Endothelial cell of umbilical vein (primary cell): ENCODE measurements at regions of chr5 and their contacts with region 1.

Region 1: DNA sequence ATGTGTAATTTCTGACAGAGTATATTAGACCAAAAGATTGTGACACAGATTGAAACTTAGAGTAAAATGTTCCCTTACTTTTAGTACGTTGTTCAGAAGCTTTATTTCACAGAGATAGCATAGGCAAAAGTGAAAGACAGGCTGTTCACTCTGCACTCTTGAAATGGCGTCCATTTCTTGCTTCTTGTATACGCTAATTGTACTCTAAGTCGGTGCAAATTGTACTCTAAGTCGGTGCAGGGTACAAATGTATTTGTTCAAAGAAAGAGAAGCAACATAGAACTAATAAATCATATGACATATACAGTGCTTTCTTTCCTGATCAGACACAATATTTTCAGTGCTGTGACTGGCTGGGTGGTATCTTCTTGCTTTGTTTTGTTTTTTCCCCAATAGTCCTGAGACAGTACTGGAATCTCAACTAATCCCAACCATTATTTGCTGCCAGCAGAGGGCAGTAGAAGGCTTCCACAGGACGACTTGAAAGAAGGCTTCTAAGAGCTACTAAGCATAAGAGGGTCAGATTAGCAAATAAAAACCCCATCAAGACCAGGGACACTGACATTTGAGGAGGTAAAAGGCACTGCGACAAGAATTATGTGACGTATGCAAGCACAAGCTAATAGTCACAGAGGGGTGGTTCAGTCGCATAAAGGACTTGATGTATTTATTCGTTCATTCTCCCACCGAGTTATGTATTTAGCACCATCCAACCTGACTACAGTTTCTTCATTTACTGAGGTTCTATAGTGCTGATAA is 831.8 kb downstream of the TAF11L14 start:
- DNase-seq: peak; percentile 10
- H3K4me3 ChIP-seq: no peak overlapping the region
- H3K27ac ChIP-seq: no peak overlapping the region
- H3K4me1 ChIP-seq: no peaks in the 10 kb centered on the region
- H3K27me3 ChIP-seq: no peaks in the 10 kb centered on the region
- CTCF ChIP-seq: peak; percentile 41 to 45
- POLR2A ChIP-seq: no peak

Region 2: GRCh38 chr5:19140276-19140675 is 674.3 kb after region 1 on chr5:
- CTCF ChIA-PET with region 1: no interaction called
- POLR2A ChIA-PET with region 1: no interaction called
- dilution Hi-C with region 1: no loop called
- intact Hi-C with region 1: no loop called
- DNase-seq: no peak
- H3K4me3 ChIP-seq: no peak overlapping the region
- H3K27ac ChIP-seq: no peak overlapping the region
- H3K4me1 ChIP-seq: no peaks in the 10 kb centered on the region
- H3K27me3 ChIP-seq: no peaks in the 10 kb centered on the region
- CTCF ChIP-seq: no peak
- POLR2A ChIP-seq: no peak

Region 3: DNA sequence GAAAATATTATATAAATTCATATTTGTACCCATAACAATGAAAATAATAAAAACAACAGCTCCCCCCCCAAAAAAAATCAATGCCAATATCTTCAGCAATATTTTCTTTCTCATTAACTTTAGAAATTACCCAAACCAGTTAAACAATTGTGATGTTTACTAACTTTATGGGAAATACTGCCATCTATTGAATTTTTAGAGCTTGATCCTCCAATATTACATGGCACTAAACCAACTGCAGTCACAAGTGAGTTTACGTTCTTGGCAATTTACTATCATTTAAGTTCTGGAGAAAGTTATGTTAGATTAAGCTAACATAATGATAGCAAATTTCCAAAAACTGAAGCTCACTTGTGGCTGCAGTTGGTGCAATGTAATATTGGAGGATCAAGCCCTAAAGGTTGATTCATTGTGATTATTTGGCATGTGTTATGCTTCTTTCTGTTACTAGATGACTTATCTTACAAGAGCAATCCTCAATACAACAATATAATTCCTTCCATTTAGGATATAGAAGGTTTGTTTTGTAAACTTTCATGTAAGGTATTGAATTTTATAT is 1142.5 kb after region 1 on chr5:
- CTCF ChIA-PET with region 1: interaction called, 10 read pairs
- POLR2A ChIA-PET with region 1: no interaction called
- dilution Hi-C with region 1: no loop called
- intact Hi-C with region 1: no loop called
- DNase-seq: no peak
- H3K4me3 ChIP-seq: no peak overlapping the region
- H3K27ac ChIP-seq: no peak overlapping the region
- H3K4me1 ChIP-seq: no peaks in the 10 kb centered on the region
- H3K27me3 ChIP-seq: no peaks in the 10 kb centered on the region
- CTCF ChIP-seq: no peak
- POLR2A ChIP-seq: no peak